ENCODE measurements at regions of chr7 and their contacts with region 1.

Region 1: DNA sequence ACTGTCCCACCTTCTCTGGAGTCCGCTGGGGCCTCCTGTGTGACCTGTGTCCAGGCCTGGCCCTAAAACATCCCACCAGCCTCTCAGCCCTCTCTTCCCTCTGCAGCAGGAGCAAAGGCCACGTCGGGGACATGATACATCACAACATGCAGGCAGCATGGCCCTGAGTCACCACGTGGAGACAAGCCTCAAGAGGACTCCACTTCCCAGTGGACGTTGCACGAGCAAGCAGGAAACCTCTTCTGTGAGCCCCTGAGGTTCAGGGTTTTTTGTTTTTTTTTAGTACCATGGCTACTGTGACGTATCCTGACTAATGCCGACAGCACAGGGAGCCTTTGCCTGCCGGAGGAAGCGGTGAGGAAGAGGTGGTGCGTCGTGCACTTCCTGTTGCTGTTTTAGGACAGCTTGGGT is 165.9 kb downstream of the DNAJB6 start:
- DNase-seq: peak; percentile 87 to 94 (median 90)
- H3K4me3 ChIP-seq: peak overlapping the region; percentile 26 to 29
- H3K4me3 Mint-ChIP-seq: peak overlapping the region; percentile 79 to 96 (median 82)
- H3K27ac ChIP-seq: peak overlapping the region; percentile 64
- H3K27ac Mint-ChIP-seq: peak overlapping the region; percentile 82 to 99 (median 98)
- H3K4me1 ChIP-seq: peaks cover 27% of the 10 kb centered on the region
- H3K4me1 Mint-ChIP-seq: peaks cover 22 to 40% (median 28%) of the 10 kb centered on the region in 4 donors
- H3K27me3 ChIP-seq: no peaks in the 10 kb centered on the region
- H3K27me3 Mint-ChIP-seq: peaks cover 2 to 12% of the 10 kb centered on the region in 2 donors

Region 2: DNA sequence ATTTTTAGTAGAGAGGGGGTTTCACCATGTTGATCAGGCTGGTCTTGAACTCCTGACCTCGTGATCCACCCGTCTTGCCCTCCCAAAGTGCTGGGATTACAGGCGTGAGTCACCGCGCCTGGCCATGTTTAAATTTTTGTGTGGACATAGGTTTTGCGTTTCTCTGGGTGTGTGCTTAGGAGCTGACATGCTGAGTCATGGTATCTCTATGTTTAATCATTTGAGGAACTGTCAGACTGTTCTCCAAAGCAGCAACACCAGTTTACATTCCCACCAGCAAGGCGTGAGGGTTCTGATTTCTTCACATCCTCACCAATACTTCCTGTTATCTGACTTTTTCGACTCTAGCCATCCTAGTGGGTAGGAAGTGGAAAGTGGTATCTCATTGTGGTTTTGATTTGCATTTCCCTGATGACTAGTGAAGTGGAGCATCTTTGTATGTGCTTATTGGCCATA is 12.2 kb before region 1 on chr7:
- CTCF ChIA-PET with region 1: interaction called, 6 read pairs
- POLR2A ChIA-PET with region 1: interaction called, 24 read pairs
- intact Hi-C with region 1: loop called (anchors 1 kb)
- DNase-seq: peak; percentile 79 to 86 (median 81)
- H3K4me3 ChIP-seq: no peak overlapping the region
- H3K4me3 Mint-ChIP-seq: peak overlapping the region in 7 of 8 donors; percentile 4 to 73 (median 66)
- H3K27ac ChIP-seq: peak overlapping the region; percentile 6
- H3K27ac Mint-ChIP-seq: peak overlapping the region; percentile 55 to 93 (median 87)
- H3K4me1 ChIP-seq: peaks cover 37% of the 10 kb centered on the region
- H3K4me1 Mint-ChIP-seq: peaks cover 26 to 50% (median 37%) of the 10 kb centered on the region in 4 donors
- H3K27me3 ChIP-seq: no peaks in the 10 kb centered on the region
- H3K27me3 Mint-ChIP-seq: peaks cover 0 to 2% of the 10 kb centered on the region in 2 donors

Region 3: DNA sequence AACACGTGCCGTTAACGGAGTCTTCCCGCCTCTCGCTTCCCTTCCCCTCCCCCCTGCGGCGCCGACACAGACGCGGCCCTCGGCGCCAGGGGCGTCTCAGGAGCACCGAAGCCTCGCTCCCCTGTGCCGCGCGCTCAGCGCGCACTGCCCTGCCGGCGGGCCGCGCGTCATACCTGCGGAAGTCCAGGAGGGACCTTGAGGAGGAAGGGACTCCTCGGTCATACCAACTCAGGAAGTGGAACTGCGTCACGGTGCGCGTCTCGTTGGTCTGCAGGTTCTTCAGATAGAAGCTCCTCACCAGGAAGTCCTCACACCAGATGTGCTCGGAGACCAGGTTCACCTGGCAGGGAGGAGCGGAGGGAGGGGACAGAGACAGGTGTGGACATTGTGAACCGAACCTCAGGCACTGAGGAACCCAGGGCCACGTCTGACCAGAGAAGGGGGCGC is 73.8 kb after region 1 on chr7:
- CTCF ChIA-PET with region 1: no interaction called
- POLR2A ChIA-PET with region 1: no interaction called
- intact Hi-C with region 1: loop called (anchors 5 kb)
- DNase-seq: peak; percentile 62 to 82 (median 75)
- H3K4me3 ChIP-seq: peak overlapping the region in 1 of 2 donors; percentile 57
- H3K4me3 Mint-ChIP-seq: peak overlapping the region; percentile 73 to 87 (median 82)
- H3K27ac ChIP-seq: peak overlapping the region; percentile 34
- H3K27ac Mint-ChIP-seq: peak overlapping the region; percentile 76 to 97 (median 92)
- H3K4me1 ChIP-seq: peaks cover 11% of the 10 kb centered on the region
- H3K4me1 Mint-ChIP-seq: peaks cover 14 to 36% (median 26%) of the 10 kb centered on the region in 4 donors
- H3K27me3 ChIP-seq: no peaks in the 10 kb centered on the region
- H3K27me3 Mint-ChIP-seq: peaks cover 0 to 3% of the 10 kb centered on the region in 2 donors

Region 4: DNA sequence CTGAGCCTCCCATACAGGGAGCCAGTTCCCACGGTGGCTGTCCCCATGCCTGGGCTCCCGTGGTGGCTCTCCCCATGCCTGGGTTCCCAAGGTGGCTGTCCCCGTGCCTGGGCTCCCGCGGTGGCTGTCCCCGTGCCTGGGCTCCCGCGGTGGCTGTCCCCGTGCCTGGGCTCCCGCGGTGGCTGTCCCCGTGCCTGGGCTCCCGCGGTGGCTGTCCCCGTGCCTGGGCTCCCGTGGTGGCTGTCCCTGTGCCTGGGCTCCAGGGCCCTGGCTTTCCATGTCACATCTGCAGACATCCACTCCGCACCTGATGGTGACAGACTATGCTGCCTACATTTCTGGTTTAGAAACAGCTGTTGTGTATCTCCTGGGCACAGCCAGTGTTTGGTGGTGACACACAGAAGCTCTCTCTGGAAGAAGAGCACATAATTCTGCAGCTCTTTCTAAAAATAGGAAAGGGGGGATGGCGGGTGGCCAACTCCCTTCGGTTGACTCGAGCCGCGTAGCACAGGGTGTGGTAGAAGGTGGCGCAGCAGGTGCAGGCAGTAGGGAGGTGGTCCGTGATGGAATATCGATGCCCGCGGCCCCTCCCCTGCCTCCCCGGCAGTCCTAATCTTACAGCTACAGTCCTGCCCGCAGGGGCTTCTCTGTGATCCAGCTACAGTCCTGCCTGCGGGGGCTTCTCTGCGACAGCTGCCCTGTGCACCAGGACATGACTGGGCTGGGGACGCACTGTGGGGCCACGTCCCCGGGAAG is 85.3 kb after region 1 on chr7:
- CTCF ChIA-PET with region 1: no interaction called
- POLR2A ChIA-PET with region 1: no interaction called
- intact Hi-C with region 1: no loop called
- DNase-seq: no peak
- H3K4me3 ChIP-seq: no peak overlapping the region
- H3K4me3 Mint-ChIP-seq: no peak overlapping the region
- H3K27ac ChIP-seq: no peak overlapping the region
- H3K27ac Mint-ChIP-seq: no peak overlapping the region
- H3K4me1 ChIP-seq: peaks cover 9% of the 10 kb centered on the region
- H3K4me1 Mint-ChIP-seq: peaks cover 4 to 22% (median 16%) of the 10 kb centered on the region in 4 donors
- H3K27me3 ChIP-seq: no peaks in the 10 kb centered on the region
- H3K27me3 Mint-ChIP-seq: peaks cover 18 to 20% of the 10 kb centered on the region in 2 donors

Measured in CD4-positive, alpha-beta memory T cell (primary cell).